Right cardiac atrium (tissue), 5 donors: ENCODE measurements at regions of chr1 and their contacts with region 1.

Region 1: DNA sequence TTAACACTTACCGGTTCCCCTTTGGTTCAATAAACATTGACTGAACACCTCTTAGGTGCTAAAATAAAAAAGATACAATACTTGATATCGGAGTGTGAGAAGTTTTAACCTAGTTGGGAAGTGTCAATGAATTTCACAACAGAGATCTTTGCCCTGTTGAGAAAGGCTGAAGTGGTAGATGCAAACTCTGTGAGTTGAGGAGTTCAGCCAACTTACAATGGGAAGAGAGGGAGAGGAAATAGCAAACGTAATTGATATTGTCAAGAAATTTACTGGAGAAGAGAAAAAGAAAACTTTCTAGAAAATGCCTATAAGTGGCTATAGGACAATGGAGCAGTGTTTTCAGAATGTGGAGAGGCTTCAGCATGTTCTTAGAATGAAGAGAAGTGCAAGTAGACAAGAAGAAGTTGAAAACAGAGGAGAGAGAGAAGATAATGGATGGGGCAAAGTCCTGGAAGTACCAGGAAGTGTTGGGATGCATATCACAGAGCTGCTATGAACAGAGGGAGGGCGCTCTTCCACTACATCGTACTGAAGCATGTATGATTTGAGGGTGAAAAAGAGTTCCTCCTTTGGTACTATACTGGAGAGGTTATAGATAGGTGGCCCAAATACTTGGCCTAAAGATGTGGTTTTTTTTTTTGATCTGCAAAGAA is 48.9 kb downstream of the MEF2D start:
- DNase-seq: no peak
- ATAC-seq: no peak
- H3K4me3 ChIP-seq: no peak overlapping the region
- H3K27ac ChIP-seq: no peak overlapping the region
- H3K4me1 ChIP-seq: no peaks in the 10 kb centered on the region
- H3K27me3 ChIP-seq: no peaks in the 10 kb centered on the region

Region 2: GRCh38 chr1:156394835-156395461 is 56.7 kb before region 1 on chr1:
- intact Hi-C with region 1: no loop called
- DNase-seq: peak in 1 of 3 donors; percentile 10
- ATAC-seq: no peak
- H3K4me3 ChIP-seq: no peak overlapping the region
- H3K27ac ChIP-seq: no peak overlapping the region
- H3K4me1 ChIP-seq: no peaks in the 10 kb centered on the region
- H3K27me3 ChIP-seq: no peaks in the 10 kb centered on the region

Region 3: GRCh38 chr1:156524481-156524869 is 72.8 kb after region 1 on chr1:
- intact Hi-C with region 1: no loop called
- DNase-seq: no peak
- ATAC-seq: peak; percentile 72 to 73
- H3K4me3 ChIP-seq: no peak overlapping the region
- H3K27ac ChIP-seq: no peak overlapping the region
- H3K4me1 ChIP-seq: no peaks in the 10 kb centered on the region
- H3K27me3 ChIP-seq: no peaks in the 10 kb centered on the region

Region 4: DNA sequence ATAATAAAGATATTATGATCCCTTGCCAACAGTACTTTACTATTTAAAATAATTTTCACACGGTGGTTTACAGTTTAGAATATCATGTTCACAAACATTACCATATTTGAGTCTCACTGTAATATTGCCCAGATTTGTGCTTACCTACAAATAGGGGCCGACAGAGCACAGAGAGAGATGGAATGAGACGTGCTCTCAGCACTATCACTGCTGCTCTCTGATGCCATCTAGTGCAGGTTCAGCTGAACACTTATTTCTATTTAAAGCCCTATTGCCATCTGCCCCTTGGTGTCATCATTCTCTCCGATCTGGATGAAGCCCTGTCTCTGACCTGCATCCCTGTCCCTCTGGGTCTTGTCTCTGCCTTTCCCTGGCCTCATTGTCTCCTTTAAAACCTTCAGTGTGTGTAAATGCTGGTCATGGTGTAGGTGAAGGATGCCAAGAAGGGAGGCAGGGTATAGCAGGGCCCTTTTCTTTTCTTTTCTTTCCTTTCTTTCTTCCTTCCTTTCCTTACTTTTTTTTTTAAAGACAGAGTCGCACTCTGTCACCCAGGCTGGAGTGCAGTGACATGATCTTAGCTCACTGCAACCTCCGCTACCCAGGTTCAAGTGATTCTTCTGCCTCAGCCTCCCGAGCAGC is 156.5 kb after region 1 on chr1:
- intact Hi-C with region 1: loop called (anchors 5 kb)
- DNase-seq: no peak
- ATAC-seq: peak; percentile 90
- H3K4me3 ChIP-seq: no peak overlapping the region
- H3K27ac ChIP-seq: no peak overlapping the region
- H3K4me1 ChIP-seq: peaks cover 2% of the 10 kb centered on the region
- H3K27me3 ChIP-seq: no peaks in the 10 kb centered on the region